Activated CD4-positive, alpha-beta T cell treated with anti-CD3 and anti-CD28 coated beads, Interleukin-2, amount 10 ng/mL, durations not matched to agents 24 days and 14 days (primary cell): ENCODE measurements at regions of chr2 and their contacts with region 1.

Region 1: DNA sequence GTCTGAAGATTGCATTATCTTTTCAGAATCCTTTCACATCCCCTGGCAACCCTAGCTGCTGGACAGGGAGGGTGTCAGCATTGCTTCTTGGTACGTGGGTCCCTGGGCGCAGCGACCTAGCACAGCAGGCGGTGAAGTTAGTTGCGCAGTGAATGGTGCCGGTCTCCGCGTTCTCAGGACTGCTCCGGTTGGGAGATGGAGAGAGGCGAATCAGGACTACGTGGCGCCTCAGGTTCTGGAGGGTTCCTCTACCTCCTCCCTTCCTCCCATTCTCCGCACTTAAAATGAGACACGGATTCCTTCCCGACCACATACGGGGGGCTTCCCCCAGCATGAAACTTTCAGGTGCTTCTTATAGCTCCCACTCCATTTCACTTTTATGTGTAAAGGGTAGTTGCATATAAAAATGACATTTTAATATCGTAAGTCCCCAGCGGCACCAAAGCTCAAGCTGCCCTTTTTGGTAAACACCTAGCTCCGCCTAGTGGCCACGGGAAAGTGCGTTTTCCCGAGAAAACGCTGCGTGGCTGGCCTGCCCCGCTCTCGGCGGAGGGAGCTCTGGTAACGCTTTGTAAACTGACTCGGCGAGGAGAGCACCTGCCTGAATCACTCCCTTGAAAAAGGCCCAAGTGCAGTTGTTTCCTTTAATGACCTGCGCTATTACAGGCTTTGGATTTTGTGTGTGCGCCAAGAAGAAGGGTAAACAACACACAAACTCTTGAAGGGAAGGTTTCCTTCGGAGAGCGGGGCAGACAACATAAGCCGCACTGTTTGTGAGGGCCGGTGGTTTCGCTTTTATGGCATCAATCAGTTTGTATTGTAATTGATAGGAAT is 32.9 kb upstream of the INHBB start:
- DNase-seq: peak; percentile 94
- H3K4me3 Mint-ChIP-seq: peak overlapping the region; percentile 80
- H3K27ac Mint-ChIP-seq: peak overlapping the region; percentile 65
- H3K4me1 Mint-ChIP-seq: peaks cover 41% of the 10 kb centered on the region
- H3K27me3 Mint-ChIP-seq: no peaks in the 10 kb centered on the region

Region 2: DNA sequence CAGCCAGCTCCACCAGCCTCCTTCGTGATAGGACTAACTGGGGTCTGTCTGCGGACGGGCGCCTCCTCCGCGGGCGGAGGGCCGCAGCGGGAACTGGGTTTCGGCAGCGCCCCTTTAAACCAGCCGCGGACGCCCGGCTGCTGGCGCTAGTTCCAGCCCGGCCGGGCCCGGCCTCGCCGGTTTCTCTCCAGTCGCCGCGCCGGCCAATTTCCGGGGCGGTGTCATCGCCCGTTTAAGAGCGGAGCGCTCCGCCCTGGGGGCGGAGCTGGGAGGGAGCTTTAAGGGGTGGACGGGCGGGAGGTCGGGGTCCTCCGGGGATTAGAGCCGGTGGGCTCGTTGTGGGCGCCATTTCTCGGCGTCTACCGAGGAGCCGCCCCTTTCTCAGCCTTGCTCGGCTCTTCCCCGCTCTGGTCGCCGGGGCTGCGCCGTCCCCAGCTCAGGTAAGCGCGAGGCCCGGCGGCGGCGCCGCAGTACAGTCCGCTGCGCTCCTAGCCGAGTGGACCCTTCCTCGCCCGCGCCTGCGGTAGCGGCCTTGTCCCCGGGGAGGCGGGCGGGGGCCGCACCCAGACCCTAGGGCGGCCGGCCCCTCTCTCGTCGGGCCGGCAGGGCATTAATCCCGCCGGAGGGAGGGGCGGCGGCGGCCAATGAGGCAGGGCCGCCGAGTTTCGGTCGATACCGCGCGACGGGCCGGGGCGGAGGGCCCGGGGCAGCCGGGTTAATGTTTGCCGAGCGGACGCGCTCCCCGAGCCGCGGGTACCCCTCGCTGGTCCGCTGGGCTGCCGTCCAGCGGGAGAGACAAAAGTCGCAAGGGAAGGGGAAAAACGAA is 300.1 kb before region 1 on chr2 and contains the start of gene EPB41L5:
- intact Hi-C with region 1: loop called (anchors 10 kb)
- DNase-seq: peak; percentile 94
- H3K4me3 Mint-ChIP-seq: peak within 1 kb of the TSS; percentile 75
- H3K27ac Mint-ChIP-seq: no peak within 1 kb of the TSS
- H3K4me1 Mint-ChIP-seq: peaks cover 11% of the 10 kb centered on the region
- H3K27me3 Mint-ChIP-seq: peaks cover 13% of the 10 kb centered on the region
- total RNA-seq, gene EPB41L5: 1.5 and 2.2 TPM in 2 replicates

Region 3: GRCh38 chr2:120206022-120206581 is 107.0 kb before region 1 on chr2:
- intact Hi-C with region 1: loop called (anchors 1 kb)
- DNase-seq: peak; percentile 82
- H3K4me3 Mint-ChIP-seq: no peak overlapping the region
- H3K27ac Mint-ChIP-seq: no peak overlapping the region
- H3K4me1 Mint-ChIP-seq: peaks cover 15% of the 10 kb centered on the region
- H3K27me3 Mint-ChIP-seq: no peaks in the 10 kb centered on the region

Region 4: GRCh38 chr2:120231974-120232635 is 81.0 kb before region 1 on chr2:
- intact Hi-C with region 1: loop called (anchors 1 kb)
- DNase-seq: peak; percentile 95
- H3K4me3 Mint-ChIP-seq: peak overlapping the region; percentile 98
- H3K27ac Mint-ChIP-seq: peak overlapping the region; percentile 99
- H3K4me1 Mint-ChIP-seq: peaks cover 61% of the 10 kb centered on the region
- H3K27me3 Mint-ChIP-seq: no peaks in the 10 kb centered on the region

Region 5: DNA sequence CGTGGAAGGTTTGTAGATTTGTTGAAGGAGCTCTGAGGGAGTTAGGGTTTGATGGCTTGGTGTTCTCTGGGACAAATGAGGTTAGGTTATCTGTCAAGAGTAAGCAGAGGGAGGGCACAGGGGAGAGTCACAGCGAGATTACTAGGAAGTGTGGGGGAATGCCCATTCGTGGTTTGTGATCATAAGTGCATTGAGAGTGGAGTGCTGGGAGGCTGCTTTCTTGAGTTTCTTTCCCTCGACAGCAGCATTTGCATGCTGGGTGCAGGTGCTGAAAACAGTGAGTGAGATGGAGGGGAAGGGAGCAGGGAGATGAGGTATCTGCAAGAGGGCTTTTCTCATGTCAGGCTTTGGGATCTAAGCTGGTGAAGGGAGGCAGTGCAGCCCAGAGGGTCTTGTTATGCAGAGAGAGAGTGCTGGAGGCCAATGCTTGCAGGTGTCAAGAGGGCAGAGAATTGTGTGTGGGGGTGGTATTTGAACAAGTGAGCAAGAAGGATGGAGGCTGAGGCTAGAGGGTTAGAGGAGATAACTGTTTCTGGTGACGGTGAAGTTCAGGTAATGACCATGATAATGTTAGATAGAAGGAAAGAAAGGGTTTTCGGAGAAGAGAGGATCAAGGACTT is 51.6 kb before region 1 on chr2:
- intact Hi-C with region 1: loop called (anchors 2 kb)
- DNase-seq: peak; percentile 87
- H3K4me3 Mint-ChIP-seq: no peak overlapping the region
- H3K27ac Mint-ChIP-seq: no peak overlapping the region
- H3K4me1 Mint-ChIP-seq: peaks cover 32% of the 10 kb centered on the region
- H3K27me3 Mint-ChIP-seq: no peaks in the 10 kb centered on the region

Region 6: GRCh38 chr2:120360307-120360855 is 47.3 kb after region 1 on chr2:
- intact Hi-C with region 1: no loop called
- DNase-seq: no peak
- H3K4me3 Mint-ChIP-seq: no peak overlapping the region
- H3K27ac Mint-ChIP-seq: no peak overlapping the region
- H3K4me1 Mint-ChIP-seq: no peaks in the 10 kb centered on the region
- H3K27me3 Mint-ChIP-seq: no peaks in the 10 kb centered on the region

Region 7: DNA sequence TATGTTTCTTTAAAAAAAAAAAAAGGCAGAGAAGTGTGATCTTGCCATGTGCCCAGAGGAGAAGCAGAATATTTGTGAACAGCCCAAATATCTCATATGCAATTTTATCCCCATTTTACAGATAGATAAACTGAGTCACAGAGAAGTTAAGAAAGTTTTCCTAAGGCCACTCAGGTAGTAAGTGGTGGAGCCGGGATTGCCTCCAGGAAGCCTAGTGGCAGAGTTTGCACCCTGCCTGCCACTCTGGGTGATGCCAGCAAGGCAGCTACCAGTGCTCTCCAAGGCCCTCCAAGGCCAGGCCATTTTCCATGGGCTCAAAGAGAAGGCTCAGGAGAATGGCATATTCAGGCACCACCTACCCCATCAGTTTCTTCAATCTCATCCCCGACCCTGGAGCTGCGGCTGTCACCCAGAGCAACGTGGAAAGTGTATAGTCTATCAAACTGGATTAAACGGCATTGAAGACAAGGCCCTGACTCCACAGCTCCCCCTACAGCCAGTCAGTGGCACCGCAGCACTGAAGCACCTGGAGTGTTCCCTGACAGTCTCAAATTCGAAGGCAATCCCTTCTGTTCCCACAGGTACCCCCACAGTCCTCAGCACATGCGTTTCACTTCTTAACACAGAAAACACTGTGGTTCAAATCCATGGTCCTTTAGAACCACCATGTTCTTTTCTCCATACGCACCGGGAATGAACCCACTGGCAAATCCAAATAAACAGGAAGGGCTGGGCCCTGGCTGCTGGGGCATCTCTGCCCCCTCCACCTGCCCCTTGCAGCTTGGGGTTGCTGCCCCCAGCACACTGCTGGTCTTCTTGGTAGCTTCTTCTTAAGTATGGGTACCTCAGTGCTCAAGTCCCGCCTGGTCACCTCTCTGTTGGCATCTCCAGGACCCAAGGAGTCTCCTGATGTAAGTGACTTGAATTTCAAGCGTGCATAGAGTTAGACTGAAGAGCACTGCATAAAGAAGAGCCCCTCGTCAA is 208.1 kb after region 1 on chr2:
- intact Hi-C with region 1: no loop called
- DNase-seq: peak; percentile 81
- H3K4me3 Mint-ChIP-seq: no peak overlapping the region
- H3K27ac Mint-ChIP-seq: no peak overlapping the region
- H3K4me1 Mint-ChIP-seq: no peaks in the 10 kb centered on the region
- H3K27me3 Mint-ChIP-seq: peaks cover 20% of the 10 kb centered on the region